Colonic mucosa (tissue), 4 donors: ENCODE measurements at regions of chr12 and their contacts with region 1.

Region 1: GRCh38 chr12:48890657-48891418 is 25.2 kb upstream of the RND1 start:
- DNase-seq: peak; percentile 77
- H3K4me3 ChIP-seq: peak overlapping the region; percentile 10
- H3K27ac ChIP-seq: no peak overlapping the region
- H3K4me1 ChIP-seq: no peaks in the 10 kb centered on the region
- H3K27me3 ChIP-seq: peaks cover 9% of the 10 kb centered on the region
- CTCF ChIP-seq: peak; percentile 88

Region 2: GRCh38 chr12:48750769-48751735 is 139.8 kb before region 1 on chr12:
- intact Hi-C with region 1: no loop called
- DNase-seq: no peak
- H3K4me3 ChIP-seq: no peak overlapping the region
- H3K27ac ChIP-seq: no peak overlapping the region
- H3K4me1 ChIP-seq: no peaks in the 10 kb centered on the region
- H3K27me3 ChIP-seq: no peaks in the 10 kb centered on the region
- CTCF ChIP-seq: no peak

Region 3: DNA sequence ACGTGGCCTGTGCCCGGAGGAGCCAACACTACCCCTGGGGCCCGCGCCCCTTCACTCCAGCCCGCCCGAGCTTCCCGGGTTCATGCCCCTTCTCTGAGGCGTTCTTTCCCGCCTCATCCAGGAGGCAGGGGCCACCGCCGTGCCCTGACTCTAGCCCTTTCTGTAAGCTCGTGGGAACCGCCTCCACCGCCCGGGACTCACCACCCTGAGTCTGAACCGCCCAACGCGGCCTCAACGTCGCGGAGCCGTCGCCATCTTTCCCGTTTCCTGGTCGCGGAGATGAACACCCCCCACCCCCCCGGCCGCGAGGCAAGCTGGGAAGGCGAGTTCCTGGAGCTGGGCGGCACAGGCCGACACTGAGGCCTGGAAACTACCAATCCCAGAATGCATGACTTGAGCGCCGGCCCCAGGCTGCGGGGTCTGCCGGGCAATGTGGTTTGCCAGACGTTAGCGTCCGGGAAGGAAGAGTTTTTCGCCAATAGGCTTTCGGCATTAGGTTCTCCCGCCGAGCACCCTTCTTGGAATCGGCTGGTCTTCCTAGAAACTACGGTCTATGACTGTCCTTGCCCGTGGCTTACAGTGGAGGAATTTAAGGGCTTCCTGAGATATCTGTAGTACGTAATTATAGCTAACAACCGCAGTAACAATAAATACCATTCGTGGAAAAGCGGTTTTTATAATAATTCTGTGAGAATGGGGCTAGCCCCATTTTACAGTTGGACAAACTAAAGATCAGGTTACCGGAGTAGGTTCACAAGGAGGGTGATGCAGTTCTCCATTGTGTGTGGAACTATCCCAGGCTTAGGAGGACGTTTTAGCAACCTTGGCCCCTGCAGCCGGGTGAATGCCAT is 38.7 kb before region 1 on chr12 and contains the start of gene DDX23:
- intact Hi-C with region 1: loop called (anchors 1 kb)
- DNase-seq: peak; percentile 95
- H3K4me3 ChIP-seq: peak within 1 kb of the TSS; percentile 94
- H3K27ac ChIP-seq: peak within 1 kb of the TSS; percentile 85
- H3K4me1 ChIP-seq: peaks cover 10% of the 10 kb centered on the region
- H3K27me3 ChIP-seq: no peaks in the 10 kb centered on the region
- CTCF ChIP-seq: no peak
- total RNA-seq, gene DDX23: 87.2 to 150 TPM